ENCODE measurements at regions of chr6 and their contacts with region 1.

Region 1: DNA sequence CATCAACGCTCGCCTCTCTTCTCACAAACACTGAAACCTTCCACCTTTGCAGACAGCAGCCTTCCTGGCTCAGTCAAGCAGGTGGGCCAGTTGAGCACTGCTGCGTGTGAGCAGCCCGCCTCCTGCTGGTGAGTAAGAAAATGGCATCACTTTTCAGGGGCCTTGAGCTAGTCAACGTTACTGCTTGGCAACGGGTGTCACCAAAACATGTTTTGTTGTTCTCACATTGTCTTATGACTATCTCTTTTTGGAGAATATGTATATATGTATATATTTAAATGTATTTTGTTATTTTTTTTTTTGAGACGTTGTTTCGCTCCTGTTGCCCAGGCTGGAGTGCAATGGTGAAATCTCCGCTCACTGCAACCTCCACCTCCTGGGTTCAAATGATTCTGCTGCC is 97.0 kb upstream of the AGPAT4 start:
- DNase-seq: peak; percentile 77
- ATAC-seq: peak; percentile 92
- H3K4me3 Mint-ChIP-seq: no peak overlapping the region
- H3K27ac Mint-ChIP-seq: no peak overlapping the region
- H3K4me1 Mint-ChIP-seq: no peaks in the 10 kb centered on the region
- H3K27me3 Mint-ChIP-seq: no peaks in the 10 kb centered on the region

Region 2: GRCh38 chr6:160733050-160733646 is 637.7 kb before region 1 on chr6:
- CTCF ChIA-PET with region 1: interaction called, 27 read pairs
- POLR2A ChIA-PET with region 1: no interaction called
- DNase-seq: peak; percentile 55
- ATAC-seq: peak; percentile 72
- H3K4me3 Mint-ChIP-seq: no peak overlapping the region
- H3K27ac Mint-ChIP-seq: no peak overlapping the region
- H3K4me1 Mint-ChIP-seq: no peaks in the 10 kb centered on the region
- H3K27me3 Mint-ChIP-seq: no peaks in the 10 kb centered on the region

Region 3: GRCh38 chr6:160930547-160931377 is 440.1 kb before region 1 on chr6:
- CTCF ChIA-PET with region 1: interaction called, 179 read pairs
- POLR2A ChIA-PET with region 1: interaction called, 3 read pairs
- DNase-seq: peak; percentile 59
- ATAC-seq: peak; percentile 86
- H3K4me3 Mint-ChIP-seq: no peak overlapping the region
- H3K27ac Mint-ChIP-seq: no peak overlapping the region
- H3K4me1 Mint-ChIP-seq: no peaks in the 10 kb centered on the region
- H3K27me3 Mint-ChIP-seq: peaks cover 24% of the 10 kb centered on the region

Region 4: GRCh38 chr6:161101517-161101916 is 269.4 kb before region 1 on chr6:
- CTCF ChIA-PET with region 1: interaction called, 12 read pairs
- POLR2A ChIA-PET with region 1: no interaction called
- DNase-seq: no peak
- ATAC-seq: no peak
- H3K4me3 Mint-ChIP-seq: no peak overlapping the region
- H3K27ac Mint-ChIP-seq: no peak overlapping the region
- H3K4me1 Mint-ChIP-seq: peaks cover 2% of the 10 kb centered on the region
- H3K27me3 Mint-ChIP-seq: no peaks in the 10 kb centered on the region

Region 5: DNA sequence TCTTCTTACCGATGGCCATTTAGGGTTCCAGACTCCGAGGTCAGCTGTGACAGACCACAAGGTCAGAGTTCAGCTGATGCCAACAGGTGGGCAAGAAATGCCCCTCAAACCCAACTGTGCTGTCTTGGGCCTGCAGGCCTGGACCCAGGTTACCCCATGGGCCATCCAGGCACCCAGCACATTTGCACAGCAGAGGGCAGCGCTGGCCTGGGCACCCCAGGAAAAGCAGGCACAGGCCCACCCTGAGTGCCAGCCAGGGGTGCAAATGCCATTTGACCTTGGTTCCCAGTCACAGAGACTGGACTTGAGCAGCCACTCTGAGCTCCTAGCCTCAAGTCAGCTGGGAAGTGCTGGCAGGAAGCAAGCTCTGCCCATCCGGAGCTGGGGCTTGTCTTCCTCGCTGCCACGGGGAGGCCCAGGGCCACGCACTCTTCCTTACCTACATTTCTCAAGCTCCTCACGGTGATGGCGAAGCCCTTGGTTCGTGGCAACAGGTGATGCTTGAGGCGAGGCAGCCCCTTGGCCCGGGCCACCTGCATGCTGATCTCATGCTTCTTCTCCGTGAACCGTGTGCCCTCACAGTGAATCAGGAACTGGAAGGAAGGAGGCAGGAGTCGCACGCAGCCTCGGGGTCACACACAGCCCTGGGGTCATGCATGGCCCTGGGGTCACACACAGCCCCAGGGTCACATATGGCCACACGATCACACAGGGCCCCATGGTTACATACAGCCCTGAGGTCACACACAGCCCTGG is 217.8 kb before region 1 on chr6:
- CTCF ChIA-PET with region 1: interaction called, 25 read pairs
- POLR2A ChIA-PET with region 1: no interaction called
- DNase-seq: no peak
- ATAC-seq: peak; percentile 49
- H3K4me3 Mint-ChIP-seq: no peak overlapping the region
- H3K27ac Mint-ChIP-seq: no peak overlapping the region
- H3K4me1 Mint-ChIP-seq: no peaks in the 10 kb centered on the region
- H3K27me3 Mint-ChIP-seq: no peaks in the 10 kb centered on the region